Sciatic nerve (tissue), 2 donors: ENCODE measurements at regions of chr1 and their contacts with region 1.

Region 1: GRCh38 chr1:109773146-109773899 is 9.6 kb upstream of the EPS8L3 start:
- DNase-seq: peak; percentile 87
- ATAC-seq: peak; percentile 87

Region 2: DNA sequence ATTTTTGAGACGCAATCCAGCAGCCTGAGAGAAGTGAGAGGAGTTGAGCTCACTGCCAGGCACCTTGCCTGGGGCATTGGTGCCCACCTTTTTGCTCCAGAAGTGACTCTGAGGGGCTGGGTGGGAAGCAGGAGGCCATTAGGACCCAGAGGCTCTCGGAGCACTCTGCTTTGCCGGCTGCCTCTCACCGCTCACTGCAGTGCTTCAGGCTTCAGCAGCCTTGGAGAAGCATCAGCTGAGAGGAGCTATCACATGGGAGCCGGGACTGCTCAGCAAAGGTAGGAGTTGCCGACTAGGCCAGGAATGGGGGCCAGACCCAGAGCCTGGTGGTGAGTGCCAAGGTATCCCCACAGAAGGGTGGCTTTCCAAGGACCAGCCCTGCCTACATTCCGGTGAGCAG is 233.6 kb before region 1 on chr1 and contains the start of gene GPR61:
- intact Hi-C with region 1: loop called (anchors 5 kb)
- DNase-seq: peak; percentile 42
- ATAC-seq: no peak
- total RNA-seq, gene GPR61: not detected

Region 3: DNA sequence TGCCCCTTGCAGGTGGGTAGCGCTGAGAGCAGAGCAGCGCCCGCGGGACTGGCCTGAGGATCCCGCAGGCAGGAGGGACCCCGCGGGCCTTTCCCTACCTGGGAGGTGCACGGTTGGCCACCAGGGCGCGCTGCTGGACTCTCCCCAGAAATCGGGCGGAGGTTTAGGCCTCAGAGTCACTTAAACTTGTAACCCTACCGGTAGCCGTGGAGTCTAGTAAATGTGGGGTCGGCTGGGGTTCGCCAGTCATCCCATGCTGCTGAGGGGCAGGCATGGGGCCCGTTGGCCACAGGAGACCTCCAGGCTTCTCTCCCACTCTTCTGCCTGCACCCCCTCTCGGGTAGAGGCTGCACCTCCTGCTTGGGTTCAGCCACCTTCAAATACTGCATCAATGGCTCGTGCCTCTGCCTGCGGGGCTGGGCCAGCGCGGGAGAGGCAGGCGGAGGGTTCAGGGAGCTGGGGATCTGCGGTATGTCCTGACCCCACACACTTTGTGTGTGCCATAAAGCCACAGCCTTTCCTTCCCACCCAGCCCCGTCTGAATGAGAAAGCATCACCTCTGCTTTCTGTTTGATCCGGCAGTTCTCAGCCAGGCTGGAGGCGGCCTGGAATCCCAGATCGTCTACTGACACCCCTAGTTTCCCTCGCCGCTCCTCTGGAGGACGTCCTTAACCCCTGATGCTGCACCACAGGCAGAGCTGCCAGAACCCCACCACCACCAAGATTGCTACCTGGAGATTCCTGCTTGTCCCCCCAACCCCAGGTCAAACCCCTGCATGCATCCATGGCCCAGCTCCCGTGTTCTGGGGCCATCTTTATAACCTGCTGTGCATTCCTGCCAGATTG is 129.7 kb before region 1 on chr1:
- intact Hi-C with region 1: loop called (anchors 5 kb)
- DNase-seq: peak; percentile 92
- ATAC-seq: peak; percentile 80

Region 4: GRCh38 chr1:109827466-109827865 is 54.1 kb after region 1 on chr1:
- intact Hi-C with region 1: no loop called
- DNase-seq: no peak
- ATAC-seq: no peak

Region 5: DNA sequence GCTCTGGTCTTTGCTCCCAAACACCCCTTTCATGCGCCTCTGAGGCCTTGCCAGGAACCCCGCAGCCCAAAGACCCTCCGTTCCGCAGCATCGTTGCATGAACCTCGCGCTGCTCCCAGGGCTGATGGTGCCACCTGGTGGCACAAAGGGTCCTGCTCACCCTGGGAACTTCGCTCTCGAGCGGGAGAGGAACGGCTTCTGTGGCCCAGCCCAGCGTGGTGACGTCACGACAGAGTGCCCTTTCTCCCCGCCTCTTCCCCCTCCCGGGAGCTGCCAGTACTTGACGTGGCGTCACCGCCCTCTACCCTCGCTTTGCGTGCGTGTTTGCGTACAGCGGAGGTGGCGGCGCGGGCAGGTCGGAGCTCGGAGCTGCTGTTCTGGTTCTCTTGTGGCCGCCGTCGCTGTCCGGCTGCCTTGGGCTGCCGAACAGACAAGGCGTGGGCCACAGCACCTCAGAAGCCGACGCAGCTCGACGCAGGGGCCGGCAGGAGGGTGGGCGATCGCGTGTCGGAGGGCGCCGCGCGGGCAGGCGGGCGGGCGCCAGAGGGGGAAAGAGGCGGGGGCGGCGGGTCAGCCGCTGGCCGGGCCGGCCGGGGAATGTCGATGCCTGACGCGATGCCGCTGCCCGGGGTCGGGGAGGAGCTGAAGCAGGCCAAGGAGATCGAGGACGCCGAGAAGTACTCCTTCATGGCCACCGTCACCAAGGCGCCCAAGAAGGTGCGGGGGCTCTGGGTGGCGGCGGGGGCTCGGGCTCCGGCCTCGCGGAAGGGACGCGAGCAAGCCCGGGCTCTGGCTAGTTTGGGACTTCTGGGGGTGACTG is 211.3 kb after region 1 on chr1 and contains the start of gene AHCYL1:
- intact Hi-C with region 1: loop called (anchors 2 kb)
- DNase-seq: peak; percentile 100
- ATAC-seq: peak; percentile 98
- total RNA-seq, gene AHCYL1: 71.3 TPM

Region 6: GRCh38 chr1:110118636-110119615 is 345.6 kb after region 1 on chr1:
- intact Hi-C with region 1: no loop called
- DNase-seq: no peak
- ATAC-seq: no peak